ENCODE measurements at regions of chr9 and their contacts with region 1.

Region 1: DNA sequence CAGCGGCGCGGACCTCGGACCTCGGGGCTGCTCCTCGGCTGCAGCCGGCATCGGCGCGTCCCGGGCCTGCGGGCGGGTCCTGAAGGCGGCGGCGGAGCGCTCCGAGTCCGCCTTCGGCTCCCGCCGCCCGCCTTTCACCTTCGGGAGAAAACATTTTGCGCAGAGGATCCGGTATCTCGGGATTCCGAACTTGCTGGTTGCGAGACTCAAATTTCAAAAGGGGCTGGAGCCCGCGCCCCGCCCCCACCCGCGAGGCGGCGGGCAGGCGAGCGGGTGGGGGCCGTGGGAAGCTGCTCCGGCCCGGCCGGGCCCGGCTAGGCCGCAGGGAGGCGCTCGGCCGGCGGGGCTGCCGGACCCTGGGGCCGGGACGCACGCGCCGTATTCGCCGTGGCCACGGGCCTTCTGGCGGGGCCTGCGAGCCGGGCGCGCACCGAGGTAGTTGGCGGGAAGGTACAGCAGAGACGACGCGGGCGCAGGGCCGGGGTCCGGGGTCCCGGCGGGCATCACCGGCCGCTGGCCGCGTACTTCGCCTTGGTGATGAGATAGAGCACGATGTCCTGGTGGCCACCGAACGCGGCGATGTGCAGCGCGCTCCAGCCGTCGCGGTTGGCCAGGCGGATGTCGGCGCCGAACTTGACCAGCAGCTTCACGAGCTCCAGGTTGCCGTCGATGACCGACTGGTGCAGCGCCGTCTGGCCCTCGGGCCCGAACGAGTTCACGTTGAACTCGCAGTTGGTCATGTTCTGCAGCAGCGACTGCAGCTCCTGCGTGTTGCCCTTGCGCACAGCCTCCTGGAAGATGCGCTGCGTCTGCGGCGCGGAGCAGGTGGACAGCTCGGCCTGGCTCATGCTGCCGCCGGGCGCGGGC is 757 bp downstream of the NRARP start:
- DNase-seq: no peak
- H3K4me3 ChIP-seq: peak overlapping the region; percentile 43 to 76 (median 59)
- H3K27ac ChIP-seq: peak overlapping the region; percentile 55 to 72
- H3K4me1 ChIP-seq: peaks cover 22% of the 10 kb centered on the region in 2 donors
- H3K27me3 ChIP-seq: peaks cover 0 to 2% of the 10 kb centered on the region in 2 donors
- CTCF ChIP-seq: peak in 1 of 3 donors; percentile 3
- POLR2A ChIP-seq: no peak

Region 2: GRCh38 chr9:137269231-137269772 is 32.0 kb before region 1 on chr9:
- intact Hi-C with region 1: loop called (anchors 1 kb)
- DNase-seq: peak in 1 of 2 donors; percentile 64
- H3K4me3 ChIP-seq: no peak overlapping the region
- H3K27ac ChIP-seq: peak overlapping the region; percentile 71 to 84
- H3K4me1 ChIP-seq: peaks cover 0 to 3% of the 10 kb centered on the region in 2 donors
- H3K27me3 ChIP-seq: no peaks in the 10 kb centered on the region
- CTCF ChIP-seq: no peak
- POLR2A ChIP-seq: no peak

Measured in breast epithelium (tissue), 4 donors.